ENCODE measurements at regions of chr3 and their contacts with region 1.

Region 1: DNA sequence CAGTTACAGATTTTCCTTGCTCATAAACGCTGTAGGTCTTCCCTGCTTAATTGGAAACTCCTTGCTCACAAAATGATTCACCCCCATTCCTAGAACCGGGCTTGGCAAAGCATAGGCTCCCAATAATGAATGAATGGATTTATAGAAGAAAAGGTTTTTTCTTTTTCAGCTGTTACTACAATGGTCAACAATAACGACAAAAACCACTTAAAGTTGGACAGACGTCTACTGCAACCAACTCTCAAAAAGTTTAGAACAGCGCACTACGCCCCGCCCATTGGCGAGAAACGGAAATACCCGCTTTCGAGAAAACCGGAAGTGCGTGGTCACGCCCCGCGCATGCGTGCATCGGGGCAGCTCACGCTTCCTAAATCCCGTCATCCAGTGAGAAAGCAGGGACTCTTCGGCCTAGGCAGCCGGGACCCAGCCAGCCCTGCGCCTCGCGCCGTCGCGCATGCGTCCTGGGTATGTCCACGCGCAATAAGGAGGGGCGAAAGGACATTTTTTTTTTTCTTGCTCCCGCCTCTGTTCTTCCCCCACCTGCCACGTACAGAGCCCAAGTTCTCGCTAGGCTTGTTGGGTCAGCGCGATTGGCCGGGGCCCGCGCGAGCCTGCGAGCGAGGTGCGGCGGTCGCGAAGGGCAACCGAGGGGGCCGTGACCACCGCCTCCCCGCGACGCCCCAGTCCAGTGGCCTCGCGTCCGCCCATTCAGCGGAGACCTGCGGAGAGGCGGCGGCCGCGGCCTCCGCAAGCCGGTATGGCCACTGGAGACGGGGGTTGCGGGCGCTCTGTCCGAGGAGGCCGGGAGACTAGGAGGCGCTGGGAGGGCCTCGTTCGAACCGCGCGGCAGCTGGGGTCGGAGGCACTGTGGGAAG is at the start of gene TFG:
- DNase-seq: peak; percentile 85 to 100 (median 95)
- ATAC-seq: peak; percentile 93 to 94 (median 94)
- H3K4me3 ChIP-seq: peak within 1 kb of the TSS; percentile 45 to 79
- H3K4me3 Mint-ChIP-seq: peak within 1 kb of the TSS; percentile 87 to 89 (median 88)
- H3K27ac ChIP-seq: peak within 1 kb of the TSS; percentile 84
- H3K27ac Mint-ChIP-seq: peak within 1 kb of the TSS; percentile 92 to 95
- H3K4me1 ChIP-seq: peaks cover 6 to 24% of the 10 kb centered on the region in 2 experiments
- H3K4me1 Mint-ChIP-seq: peaks cover 44 to 51% (median 44%) of the 10 kb centered on the region in 3 donors
- H3K27me3 ChIP-seq: peaks cover 0 to 2% of the 10 kb centered on the region in 2 experiments
- H3K27me3 Mint-ChIP-seq: peaks cover 4 to 8% of the 10 kb centered on the region in 2 donors
- total RNA-seq, gene TFG: 37.8 to 49.4 (median 44.1) TPM

Region 2: DNA sequence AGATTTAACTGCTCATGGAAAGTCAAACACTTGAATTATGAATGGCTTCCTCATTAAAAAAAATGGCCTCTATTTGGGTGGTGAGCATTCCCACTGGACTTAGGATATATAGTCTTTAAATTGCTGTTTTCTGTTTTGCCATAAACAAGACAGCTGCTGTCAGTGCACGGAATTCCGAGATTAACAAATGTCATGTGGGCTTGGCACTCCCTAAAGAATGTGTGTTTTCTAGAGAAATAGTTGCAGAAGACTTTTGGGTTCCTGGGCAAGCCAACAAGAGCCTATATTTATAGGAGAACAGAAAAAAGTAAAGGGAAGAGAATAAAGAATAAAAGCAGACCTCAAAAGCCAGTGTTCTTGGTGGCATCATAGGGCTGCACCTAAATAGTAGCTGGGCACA is 13.5 kb before region 1 on chr3:
- CTCF ChIA-PET with region 1: no interaction called
- POLR2A ChIA-PET with region 1: no interaction called
- DNase-seq: no peak
- ATAC-seq: no peak
- H3K4me3 ChIP-seq: no peak overlapping the region
- H3K4me3 Mint-ChIP-seq: no peak overlapping the region
- H3K27ac ChIP-seq: no peak overlapping the region
- H3K27ac Mint-ChIP-seq: peak overlapping the region in 1 of 2 donors; percentile 38
- H3K4me1 ChIP-seq: no peaks in the 10 kb centered on the region
- H3K4me1 Mint-ChIP-seq: no peaks in the 10 kb centered on the region
- H3K27me3 ChIP-seq: peaks cover 0 to 16% of the 10 kb centered on the region in 2 experiments
- H3K27me3 Mint-ChIP-seq: peaks cover 53 to 66% of the 10 kb centered on the region in 2 donors

Region 3: GRCh38 chr3:100725935-100726513 is 16.8 kb after region 1 on chr3:
- CTCF ChIA-PET with region 1: interaction called, 5 to 7 read pairs
- POLR2A ChIA-PET with region 1: interaction called, 3 to 13 read pairs
- DNase-seq: no peak
- ATAC-seq: no peak
- H3K4me3 ChIP-seq: no peak overlapping the region
- H3K4me3 Mint-ChIP-seq: no peak overlapping the region
- H3K27ac ChIP-seq: no peak overlapping the region
- H3K27ac Mint-ChIP-seq: no peak overlapping the region
- H3K4me1 ChIP-seq: no peaks in the 10 kb centered on the region
- H3K4me1 Mint-ChIP-seq: peaks cover 10 to 28% (median 21%) of the 10 kb centered on the region in 3 donors
- H3K27me3 ChIP-seq: no peaks in the 10 kb centered on the region
- H3K27me3 Mint-ChIP-seq: no peaks in the 10 kb centered on the region

Measured in T-cell (primary cell).